H1 (cell line): ENCODE measurements at regions of chr15 and their contacts with region 1.

Region 1: GRCh38 chr15:66619151-66619903 is 53.5 kb upstream of the LCTL start:
- DNase-seq: peak; percentile 44 to 91
- H3K4me3 ChIP-seq: no peak overlapping the region
- H3K27ac ChIP-seq: no peak overlapping the region
- H3K4me1 ChIP-seq: peaks cover 18 to 31% (median 24%) of the 10 kb centered on the region in 4 experiments
- H3K27me3 ChIP-seq: peaks cover 0 to 5% (median 1%) of the 10 kb centered on the region in 4 experiments; a peak in 4 of 7 replicates
- CTCF ChIP-seq: peak; percentile 82 to 89 (median 88)
- EP300 ChIP-seq: no peak
- POLR2A ChIP-seq: no peak
- RAD21 ChIP-seq: peak; percentile 82 to 86

Region 2: GRCh38 chr15:66598095-66598815 is 21.1 kb before region 1 on chr15:
- CTCF ChIA-PET with region 1: interaction called, 85 read pairs
- POLR2A ChIA-PET with region 1: interaction called, 3 read pairs
- DNase-seq: no peak
- H3K4me3 ChIP-seq: no peak overlapping the region
- H3K27ac ChIP-seq: no peak overlapping the region
- H3K4me1 ChIP-seq: no peaks in the 10 kb centered on the region
- H3K27me3 ChIP-seq: no peaks in the 10 kb centered on the region
- CTCF ChIP-seq: no peak
- EP300 ChIP-seq: no peak
- POLR2A ChIP-seq: no peak
- RAD21 ChIP-seq: no peak

Region 3: DNA sequence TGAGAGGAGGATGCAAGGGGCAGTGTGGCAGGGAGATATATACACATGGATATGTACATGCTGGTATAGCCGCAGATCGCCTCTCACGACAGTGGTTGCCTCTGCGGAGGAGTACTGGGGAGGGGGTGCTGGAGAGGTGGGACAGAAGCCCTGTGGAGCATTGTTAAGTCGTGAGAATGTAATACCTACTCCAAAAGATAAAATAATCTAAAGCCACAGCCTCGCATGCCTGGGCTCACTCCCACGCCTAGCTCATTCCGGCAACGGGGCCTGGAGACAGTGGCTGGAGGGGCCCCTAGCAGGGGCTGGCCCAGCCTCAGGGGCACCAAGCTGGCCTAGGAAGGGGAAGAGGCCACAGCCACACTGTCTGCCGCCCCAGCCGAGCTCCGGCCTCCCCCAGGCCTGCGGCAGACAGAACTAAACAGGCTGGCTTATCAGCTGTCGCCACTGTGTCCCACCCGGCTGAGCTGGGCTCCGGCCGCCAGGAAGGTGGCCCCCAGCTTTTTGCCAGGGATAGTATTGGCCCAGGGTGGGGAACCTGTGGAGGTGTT is 11.5 kb after region 1 on chr15:
- CTCF ChIA-PET with region 1: interaction called, 13 read pairs
- POLR2A ChIA-PET with region 1: interaction called, 13 read pairs
- DNase-seq: no peak
- H3K4me3 ChIP-seq: no peak overlapping the region
- H3K27ac ChIP-seq: no peak overlapping the region
- H3K4me1 ChIP-seq: peaks cover 8 to 22% (median 14%) of the 10 kb centered on the region in 4 experiments
- H3K27me3 ChIP-seq: no peaks in the 10 kb centered on the region
- CTCF ChIP-seq: no peak
- EP300 ChIP-seq: no peak
- POLR2A ChIP-seq: no peak
- RAD21 ChIP-seq: no peak

Region 4: DNA sequence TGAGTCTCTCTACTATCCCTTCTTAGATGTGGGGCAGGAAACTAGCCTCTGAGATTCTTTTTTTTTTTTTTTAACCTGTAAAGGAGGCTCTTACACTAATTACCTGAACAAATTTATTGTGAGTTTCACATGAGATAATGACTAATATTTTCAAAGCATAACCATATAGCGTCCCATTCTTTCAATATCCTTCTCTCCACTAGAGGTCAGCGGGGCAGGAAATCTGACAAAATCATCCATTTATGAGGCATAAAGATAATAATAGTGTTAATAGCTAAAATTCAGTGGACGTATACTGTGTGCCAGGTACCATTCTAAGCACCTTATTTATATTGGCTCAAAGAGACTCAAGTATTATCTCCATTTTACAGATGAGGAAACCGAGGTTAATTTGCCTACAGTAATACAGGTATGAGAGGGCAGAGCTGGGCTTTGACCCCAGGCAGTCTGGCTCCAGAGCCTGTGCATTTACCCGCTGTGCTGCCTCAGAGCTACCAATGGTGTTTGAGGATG is 66.4 kb after region 1 on chr15:
- CTCF ChIA-PET with region 1: interaction called, 17 read pairs
- POLR2A ChIA-PET with region 1: no interaction called
- DNase-seq: no peak
- H3K4me3 ChIP-seq: no peak overlapping the region
- H3K27ac ChIP-seq: no peak overlapping the region
- H3K4me1 ChIP-seq: no peaks in the 10 kb centered on the region
- H3K27me3 ChIP-seq: no peaks in the 10 kb centered on the region
- CTCF ChIP-seq: peak in 1 of 3 experiments; percentile 22; a peak in 1 of 4 replicates
- EP300 ChIP-seq: no peak
- POLR2A ChIP-seq: no peak
- RAD21 ChIP-seq: peak in 1 of 2 experiments; percentile 11; a peak in 1 of 4 replicates

Region 5: DNA sequence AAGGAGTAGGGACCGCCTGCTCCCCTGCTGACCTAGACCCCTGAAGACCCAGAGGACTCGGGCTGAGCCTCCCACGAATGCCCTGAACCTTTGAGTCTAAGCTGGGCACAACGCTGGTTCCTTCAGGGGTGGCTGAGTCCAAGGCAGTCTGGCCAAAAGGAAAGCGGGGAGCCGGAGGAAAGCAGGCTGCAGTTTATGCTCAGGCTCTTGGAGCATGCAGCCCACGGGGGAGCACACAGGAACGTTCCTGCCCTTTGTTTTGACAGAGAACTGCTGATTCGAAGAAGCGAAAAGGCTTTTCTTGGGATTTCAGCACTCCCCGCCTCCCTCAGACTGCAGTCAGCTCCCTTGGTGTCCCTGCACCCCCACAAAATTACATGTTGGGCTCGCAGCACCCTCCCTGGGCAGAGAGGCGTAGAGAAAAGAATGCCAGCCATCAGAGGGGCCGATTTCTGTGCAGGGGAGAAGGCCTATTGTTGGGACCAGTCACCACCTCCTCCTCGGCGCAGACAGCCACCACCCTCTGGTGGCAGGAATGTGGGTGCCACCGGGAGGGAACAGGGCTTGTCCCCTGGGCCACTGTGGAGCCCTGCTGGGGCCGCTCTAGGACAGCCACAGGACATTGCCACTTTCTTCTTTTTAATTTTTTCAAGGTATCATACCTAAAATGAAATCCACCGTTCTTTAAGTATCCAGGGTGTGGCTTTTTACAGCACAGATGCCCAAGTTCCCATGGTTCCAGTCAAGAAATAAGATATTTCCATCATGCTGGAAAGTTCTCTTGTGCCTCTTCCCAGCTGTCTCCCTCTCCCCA is 154.9 kb after region 1 on chr15:
- CTCF ChIA-PET with region 1: interaction called, 13 read pairs
- POLR2A ChIA-PET with region 1: interaction called, 3 read pairs
- DNase-seq: peak; percentile 68 to 95
- H3K4me3 ChIP-seq: peak overlapping the region in 1 of 4 experiments; percentile 23; a peak in 3 of 8 replicates
- H3K27ac ChIP-seq: peak overlapping the region; percentile 56
- H3K4me1 ChIP-seq: peaks cover 11 to 24% (median 18%) of the 10 kb centered on the region in 4 experiments
- H3K27me3 ChIP-seq: no peaks in the 10 kb centered on the region
- CTCF ChIP-seq: peak; percentile 94 to 95 (median 95)
- EP300 ChIP-seq: peak in 1 of 2 experiments; percentile 60; a peak in 1 of 3 replicates
- POLR2A ChIP-seq: no peak
- RAD21 ChIP-seq: peak; percentile 87 to 92